Activated CD8-positive, alpha-beta T cell treated with anti-CD3 and anti-CD28 coated beads, Interleukin-2, amount 10 ng/mL, durations not matched to agents 7 days and 5 days (primary cell): ENCODE measurements at regions of chr11 and their contacts with region 1.

Region 1: DNA sequence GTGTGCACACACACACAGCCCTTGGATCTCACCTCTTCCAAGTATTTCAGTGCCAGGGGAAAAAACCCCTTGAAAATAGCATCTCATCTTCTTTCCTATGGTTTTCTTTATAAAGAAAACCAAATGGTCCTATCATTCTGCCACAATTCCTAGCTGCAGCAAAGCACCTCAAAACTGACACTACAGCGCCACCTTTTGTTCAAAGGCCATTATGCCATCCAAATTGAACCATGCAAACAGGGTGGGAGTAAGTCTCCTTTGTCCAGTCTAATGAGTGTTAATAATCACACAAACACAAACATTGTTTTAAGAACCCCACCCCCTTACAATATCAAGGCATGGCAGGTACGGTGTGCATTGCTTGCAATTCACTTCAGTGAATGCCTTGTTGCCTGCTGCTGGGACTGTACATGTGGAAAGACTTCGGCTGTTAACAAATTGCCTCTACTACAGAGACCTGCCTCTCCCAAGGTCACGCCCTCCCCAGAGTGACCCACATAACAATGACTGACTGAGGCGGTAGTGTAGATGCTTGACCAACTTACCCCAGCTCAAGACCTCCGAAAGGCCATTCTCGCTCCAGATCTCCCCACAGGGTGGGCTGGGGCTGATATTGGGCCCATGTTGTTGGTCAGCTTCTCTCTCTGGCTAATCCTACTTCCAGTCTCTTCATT is 31.7 kb downstream of the FAM181B start:
- DNase-seq: peak; percentile 43
- ATAC-seq: no peak
- H3K4me3 Mint-ChIP-seq: no peak overlapping the region
- H3K27ac Mint-ChIP-seq: no peak overlapping the region
- H3K4me1 Mint-ChIP-seq: no peaks in the 10 kb centered on the region
- H3K27me3 Mint-ChIP-seq: peaks cover 10% of the 10 kb centered on the region

Region 2: DNA sequence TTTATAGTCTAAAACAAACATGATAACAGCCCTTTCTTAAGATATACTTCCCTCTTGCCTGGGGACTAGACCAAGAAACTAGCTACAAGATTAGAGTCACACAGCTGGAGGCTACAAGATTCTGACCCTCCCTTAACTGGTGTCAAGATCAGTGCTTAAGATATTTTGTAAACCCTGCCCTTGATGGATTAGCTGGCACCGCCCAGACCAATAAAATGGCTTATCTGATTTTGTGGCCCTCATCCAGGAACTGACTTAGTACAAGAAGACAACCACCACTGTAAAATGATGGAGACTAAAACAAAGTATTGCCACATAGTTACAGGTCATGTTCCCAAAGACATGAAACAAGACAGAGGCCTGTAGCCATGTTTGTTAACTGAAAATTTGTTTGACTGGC is 21.7 kb before region 1 on chr11:
- CTCF ChIA-PET with region 1: interaction called, 10 read pairs
- POLR2A ChIA-PET with region 1: no interaction called
- DNase-seq: no peak
- ATAC-seq: no peak
- H3K4me3 Mint-ChIP-seq: no peak overlapping the region
- H3K27ac Mint-ChIP-seq: no peak overlapping the region
- H3K4me1 Mint-ChIP-seq: peaks cover 2% of the 10 kb centered on the region
- H3K27me3 Mint-ChIP-seq: peaks cover 8% of the 10 kb centered on the region

Region 3: GRCh38 chr11:82718307-82718706 is 16.3 kb after region 1 on chr11:
- CTCF ChIA-PET with region 1: interaction called, 11 read pairs
- POLR2A ChIA-PET with region 1: no interaction called
- DNase-seq: peak; percentile 44
- ATAC-seq: no peak
- H3K4me3 Mint-ChIP-seq: no peak overlapping the region
- H3K27ac Mint-ChIP-seq: no peak overlapping the region
- H3K4me1 Mint-ChIP-seq: no peaks in the 10 kb centered on the region
- H3K27me3 Mint-ChIP-seq: peaks cover 3% of the 10 kb centered on the region